ENCODE measurements at regions of chr3 and their contacts with region 1.

Region 1: GRCh38 chr3:172622916-172623700 is 87.8 kb downstream of the NCEH1 start:
- DNase-seq: peak; percentile 74
- H3K4me3 Mint-ChIP-seq: no peak overlapping the region
- H3K27ac Mint-ChIP-seq: peak overlapping the region; percentile 63
- H3K4me1 Mint-ChIP-seq: peaks cover 53% of the 10 kb centered on the region
- H3K27me3 Mint-ChIP-seq: no peaks in the 10 kb centered on the region
- CTCF ChIP-seq: peak; percentile 61

Region 2: DNA sequence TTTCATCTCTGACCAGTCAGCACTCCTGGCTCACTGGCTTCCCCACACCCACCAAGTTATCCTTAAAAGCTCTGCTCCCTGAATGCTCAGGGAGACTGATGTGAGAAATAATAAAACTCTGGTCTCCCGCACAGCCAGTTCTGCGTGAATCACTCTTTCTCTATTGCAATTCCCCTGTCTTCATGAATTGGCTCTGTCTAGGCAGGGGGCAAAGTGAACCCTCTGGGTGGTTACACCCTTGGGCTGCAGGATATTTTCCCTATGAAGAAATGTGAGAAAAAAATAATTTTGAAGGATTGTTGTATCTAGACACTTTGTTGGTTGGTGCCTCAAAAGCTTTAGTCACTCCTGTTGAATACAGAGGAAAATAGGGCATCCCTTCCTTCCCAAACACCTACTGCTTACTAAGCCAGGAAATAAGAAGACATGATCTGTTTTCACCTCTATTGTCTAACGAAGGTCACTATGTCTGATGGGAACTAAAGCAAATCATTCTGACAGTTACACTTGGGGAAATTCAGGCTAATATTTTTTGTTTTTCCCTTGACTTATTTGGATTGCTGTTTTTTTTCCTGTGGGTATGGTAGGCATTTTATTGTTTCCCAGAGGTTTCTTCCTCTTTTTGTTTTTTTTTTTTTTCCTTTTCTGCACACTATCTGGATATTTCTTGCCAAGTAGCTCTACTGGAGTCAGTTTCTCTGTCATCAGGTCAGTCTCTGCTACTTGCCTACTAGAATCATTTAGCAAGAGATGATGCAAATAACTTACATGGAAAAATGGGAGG is 84.5 kb before region 1 on chr3:
- CTCF ChIA-PET with region 1: no interaction called
- intact Hi-C with region 1: no loop called
- DNase-seq: no peak
- H3K4me3 Mint-ChIP-seq: no peak overlapping the region
- H3K27ac Mint-ChIP-seq: no peak overlapping the region
- H3K4me1 Mint-ChIP-seq: peaks cover 35% of the 10 kb centered on the region
- H3K27me3 Mint-ChIP-seq: no peaks in the 10 kb centered on the region
- CTCF ChIP-seq: no peak

Region 3: DNA sequence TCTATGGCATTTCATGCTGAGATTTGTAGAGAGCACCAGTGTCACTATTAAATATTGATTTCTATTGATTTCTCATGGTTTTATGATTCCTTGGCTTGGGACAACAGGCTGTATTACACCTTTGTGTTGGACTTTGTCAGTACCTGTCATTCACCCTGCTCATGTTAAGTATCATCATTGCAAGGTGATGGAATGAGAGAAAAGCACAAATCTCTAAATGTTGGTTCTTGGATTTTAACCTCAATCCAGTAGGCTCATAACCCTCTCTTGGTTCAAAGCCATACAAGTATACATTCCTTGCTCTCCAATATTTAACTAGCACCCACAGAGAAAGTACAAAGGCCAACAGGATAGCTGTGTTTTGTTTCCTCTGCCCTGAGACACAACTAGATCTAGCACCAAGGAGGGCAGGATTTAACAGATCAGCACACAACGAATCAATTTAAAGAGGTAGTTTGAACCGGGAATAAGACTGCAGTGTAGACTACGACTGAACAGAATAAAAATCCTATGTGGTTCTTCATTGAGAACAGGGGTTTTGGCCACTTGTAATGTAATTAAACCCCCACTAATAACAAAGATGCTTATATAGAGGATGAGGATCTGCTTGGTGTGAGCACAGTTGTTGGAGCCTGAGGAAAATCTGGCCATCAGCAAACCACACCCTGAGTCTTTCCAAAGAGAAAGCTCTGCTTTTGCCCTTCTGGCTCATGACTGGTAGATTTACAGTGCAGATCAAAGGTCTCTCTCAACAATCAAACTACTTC is 21.9 kb before region 1 on chr3:
- CTCF ChIA-PET with region 1: interaction called, 3 read pairs
- intact Hi-C with region 1: loop called (anchors 2 kb)
- DNase-seq: peak; percentile 40
- H3K4me3 Mint-ChIP-seq: peak overlapping the region; percentile 48
- H3K27ac Mint-ChIP-seq: peak overlapping the region; percentile 52
- H3K4me1 Mint-ChIP-seq: peaks cover 58% of the 10 kb centered on the region
- H3K27me3 Mint-ChIP-seq: no peaks in the 10 kb centered on the region
- CTCF ChIP-seq: no peak

Region 4: GRCh38 chr3:172824229-172824628 is 201.1 kb after region 1 on chr3:
- CTCF ChIA-PET with region 1: no interaction called
- intact Hi-C with region 1: no loop called
- DNase-seq: no peak
- H3K4me3 Mint-ChIP-seq: no peak overlapping the region
- H3K27ac Mint-ChIP-seq: no peak overlapping the region
- H3K4me1 Mint-ChIP-seq: no peaks in the 10 kb centered on the region
- H3K27me3 Mint-ChIP-seq: no peaks in the 10 kb centered on the region
- CTCF ChIP-seq: no peak